Left colon (tissue), 2 donors: ENCODE measurements at regions of chr9 and their contacts with region 1.

Region 1: GRCh38 chr9:136122425-136123383 is 4.0 kb upstream of the TMEM250 start:
- DNase-seq: peak; percentile 51 to 82
- ATAC-seq: peak; percentile 20

Region 2: GRCh38 chr9:135969064-135969683 is 153.5 kb before region 1 on chr9:
- intact Hi-C with region 1: loop called (anchors 2 to 5 kb)
- DNase-seq: no peak
- ATAC-seq: no peak

Region 3: GRCh38 chr9:136204838-136205706 is 82.4 kb after region 1 on chr9 and contains the start of gene LHX3:
- intact Hi-C with region 1: no loop called
- DNase-seq: peak in 1 of 2 donors; percentile 21
- ATAC-seq: peak; percentile 49
- total RNA-seq, gene LHX3: not detected

Region 4: DNA sequence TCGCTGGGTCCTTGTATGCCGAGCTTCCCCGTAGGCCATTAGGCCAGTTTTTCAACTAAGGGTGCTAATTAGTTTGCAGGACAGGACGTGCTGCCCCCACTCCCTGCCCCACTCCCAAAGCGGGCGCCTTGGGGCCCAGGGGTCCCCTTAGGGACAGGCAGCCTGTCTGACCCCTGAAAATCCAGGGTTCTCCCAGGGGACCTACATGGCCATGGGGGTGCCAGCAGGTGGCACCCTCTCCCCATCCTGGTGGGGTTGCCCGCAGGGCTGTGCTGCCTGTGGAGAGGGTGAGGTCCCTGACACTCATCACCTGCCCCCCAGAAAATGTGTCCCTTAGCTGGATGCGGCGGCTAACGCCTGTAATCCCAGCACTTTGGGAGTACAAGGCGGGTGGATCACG is 189.7 kb after region 1 on chr9:
- intact Hi-C with region 1: no loop called
- DNase-seq: no peak
- ATAC-seq: peak; percentile 35